CD14-positive monocyte (primary cell): ENCODE measurements at regions of chr9 and their contacts with region 1.

Region 1: DNA sequence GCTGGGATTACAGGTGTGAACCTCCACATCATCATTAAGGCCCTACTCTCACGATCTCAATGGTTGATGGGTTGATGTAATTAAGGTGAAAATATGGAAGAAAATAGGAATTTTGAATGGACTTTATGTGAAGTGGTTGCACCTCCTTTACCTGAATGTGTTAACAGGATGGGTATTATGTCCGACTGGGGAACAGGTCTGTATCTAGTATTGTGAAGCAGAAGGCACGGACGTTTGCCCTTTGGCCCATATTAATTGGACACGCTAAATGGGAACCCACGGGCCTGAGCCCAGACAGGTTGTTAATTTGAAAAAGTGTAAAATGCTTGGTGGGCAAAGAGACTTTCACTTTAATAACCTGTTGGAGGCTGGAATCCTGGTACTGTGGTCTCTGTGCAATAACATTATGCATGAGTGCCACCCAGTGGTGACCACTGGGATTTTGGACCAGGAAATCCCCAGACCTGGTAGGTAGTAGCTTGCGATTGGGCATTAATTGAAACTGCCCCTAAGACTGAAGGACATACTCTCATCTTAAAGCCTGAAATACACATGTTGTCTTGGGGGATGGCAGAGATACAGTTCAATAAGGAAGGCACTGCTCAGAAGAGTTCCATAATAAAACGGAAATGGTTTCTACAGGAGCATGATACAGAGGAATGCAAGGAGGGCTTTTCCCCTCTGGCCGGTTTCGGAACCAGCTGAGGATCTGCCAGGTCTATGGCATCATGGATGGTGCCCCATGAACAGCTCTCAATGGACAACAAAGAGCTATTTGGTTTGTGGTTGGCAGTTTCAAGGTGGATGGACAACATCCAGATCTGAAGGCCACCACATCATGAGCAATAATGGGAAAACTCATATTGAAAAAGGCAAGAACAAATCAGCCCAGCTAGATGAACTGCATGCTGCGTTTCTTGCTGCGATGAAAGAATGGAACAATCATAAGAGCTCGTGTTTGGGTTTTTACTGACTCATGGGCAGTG is 26.2 kb upstream of the BICD2 start:
- DNase-seq: peak; percentile 75 to 85 (median 76)
- H3K4me3 ChIP-seq: no peak overlapping the region
- H3K4me3 Mint-ChIP-seq: peak overlapping the region in 1 of 2 donors; percentile 15
- H3K27ac ChIP-seq: no peak overlapping the region
- H3K27ac Mint-ChIP-seq: peak overlapping the region in 2 of 7 donors; percentile 19 to 46
- H3K4me1 ChIP-seq: peaks cover 0 to 3% of the 10 kb centered on the region in 2 donors
- H3K4me1 Mint-ChIP-seq: peaks cover 4% of the 10 kb centered on the region
- H3K27me3 ChIP-seq: peaks cover 0 to 3% of the 10 kb centered on the region in 2 donors
- H3K27me3 Mint-ChIP-seq: peaks cover 0 to 6% (median 2%) of the 10 kb centered on the region in 3 donors
- CTCF ChIP-seq: peak; percentile 89

Region 2: GRCh38 chr9:92716557-92716956 is 74.3 kb before region 1 on chr9:
- intact Hi-C with region 1: loop called (anchors 1 to 2 kb)
- DNase-seq: peak; percentile 26 to 49 (median 49)
- H3K4me3 ChIP-seq: no peak overlapping the region
- H3K4me3 Mint-ChIP-seq: no peak overlapping the region
- H3K27ac ChIP-seq: peak overlapping the region in 1 of 2 donors; percentile 45
- H3K27ac Mint-ChIP-seq: peak overlapping the region in 1 of 7 donors; percentile 13
- H3K4me1 ChIP-seq: peaks cover 9 to 11% of the 10 kb centered on the region in 2 donors
- H3K4me1 Mint-ChIP-seq: peaks cover 18% of the 10 kb centered on the region
- H3K27me3 ChIP-seq: no peaks in the 10 kb centered on the region
- H3K27me3 Mint-ChIP-seq: peaks cover 0 to 3% (median 0%) of the 10 kb centered on the region in 3 donors
- CTCF ChIP-seq: peak; percentile 99